ENCODE measurements at regions of chr11 and their contacts with region 1.

Region 1: DNA sequence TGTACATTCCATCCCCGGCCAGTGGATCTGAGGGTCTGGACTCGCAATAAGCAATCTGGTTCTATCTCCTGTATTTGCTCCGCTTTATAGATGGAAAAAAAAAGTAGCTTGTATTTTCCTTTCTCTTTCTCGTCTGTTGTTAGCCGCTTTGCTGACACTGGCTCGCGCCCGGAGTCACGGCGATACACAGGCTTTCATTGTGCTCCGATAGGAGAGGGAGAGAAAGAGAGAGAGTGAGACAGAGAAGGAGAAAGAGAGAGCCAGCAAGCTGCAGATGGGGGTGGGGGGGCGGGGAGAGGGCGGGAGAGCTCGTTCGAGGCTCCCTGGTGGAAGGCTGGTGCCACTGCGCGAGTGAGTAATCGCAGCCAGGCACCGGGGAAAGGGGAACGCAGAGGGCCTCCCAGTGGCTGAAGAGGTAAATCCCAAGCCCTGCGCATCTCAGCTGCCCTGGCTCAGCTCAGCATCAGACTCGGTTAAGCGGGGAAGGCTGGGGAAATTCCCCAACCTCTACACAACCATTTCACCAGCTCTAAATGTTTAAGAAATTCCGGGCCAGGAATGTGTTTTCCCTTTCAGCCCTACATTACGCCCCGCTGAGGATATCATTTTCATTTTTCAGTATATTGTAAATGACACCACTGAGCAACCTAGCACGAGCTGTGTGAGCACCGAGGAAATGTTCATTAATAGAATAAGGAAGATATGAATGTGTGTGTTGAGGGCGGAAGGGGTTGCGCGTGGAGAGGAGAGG is at the start of gene MAML2:
- DNase-seq: peak; percentile 95
- ATAC-seq: peak; percentile 82
- H3K4me3 Mint-ChIP-seq: peak within 1 kb of the TSS; percentile 92
- H3K27ac Mint-ChIP-seq: peak within 1 kb of the TSS; percentile 92
- H3K4me1 Mint-ChIP-seq: peaks cover 33% of the 10 kb centered on the region
- H3K27me3 Mint-ChIP-seq: no peaks in the 10 kb centered on the region
- total RNA-seq, gene MAML2: 12.7 to 14.5 TPM

Region 2: GRCh38 chr11:96012086-96012824 is 330.9 kb before region 1 on chr11:
- CTCF ChIA-PET with region 1: interaction called, 16 read pairs
- DNase-seq: no peak
- ATAC-seq: peak; percentile 37
- H3K4me3 Mint-ChIP-seq: no peak overlapping the region
- H3K27ac Mint-ChIP-seq: peak overlapping the region; percentile 34
- H3K4me1 Mint-ChIP-seq: peaks cover 50% of the 10 kb centered on the region
- H3K27me3 Mint-ChIP-seq: no peaks in the 10 kb centered on the region

Region 3: DNA sequence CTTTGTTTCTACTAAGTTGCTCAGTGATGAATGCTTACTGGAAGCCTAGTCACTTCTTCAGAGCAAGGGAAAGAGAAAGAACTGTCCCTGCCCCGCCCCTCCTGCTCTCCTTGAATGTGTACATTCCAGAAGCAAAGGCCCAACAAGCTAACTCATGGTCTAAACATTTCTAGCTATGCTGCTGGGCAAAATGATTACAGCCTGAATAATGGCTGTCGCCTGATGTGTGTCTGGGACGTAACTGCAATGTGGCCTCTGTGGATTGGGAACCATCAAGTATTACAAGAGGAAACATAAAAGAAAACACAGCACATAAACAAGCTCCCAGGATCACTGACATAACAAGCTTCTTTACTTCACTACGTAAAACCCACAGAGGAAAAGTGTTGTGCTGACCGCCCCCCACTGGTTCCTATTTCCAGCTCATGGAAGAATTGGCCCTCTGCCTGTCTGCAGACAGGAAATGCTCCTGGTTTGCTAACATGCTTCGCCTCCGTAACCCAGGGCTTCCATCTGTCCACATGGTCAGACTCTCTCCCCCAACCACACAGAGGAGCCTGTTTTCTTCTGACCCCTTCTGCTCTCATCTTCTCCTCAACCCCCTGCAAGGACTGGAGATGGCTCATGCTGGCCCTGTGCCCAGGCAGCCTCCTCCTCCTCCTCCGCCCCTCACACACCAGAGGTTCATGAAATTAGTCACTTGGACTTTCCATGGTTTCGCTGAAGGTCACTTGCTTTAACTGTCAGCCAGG is 187.3 kb before region 1 on chr11:
- CTCF ChIA-PET with region 1: interaction called, 12 read pairs
- DNase-seq: peak; percentile 70
- ATAC-seq: peak; percentile 61
- H3K4me3 Mint-ChIP-seq: peak overlapping the region; percentile 31
- H3K27ac Mint-ChIP-seq: peak overlapping the region; percentile 90
- H3K4me1 Mint-ChIP-seq: peaks cover 43% of the 10 kb centered on the region
- H3K27me3 Mint-ChIP-seq: no peaks in the 10 kb centered on the region

Region 4: DNA sequence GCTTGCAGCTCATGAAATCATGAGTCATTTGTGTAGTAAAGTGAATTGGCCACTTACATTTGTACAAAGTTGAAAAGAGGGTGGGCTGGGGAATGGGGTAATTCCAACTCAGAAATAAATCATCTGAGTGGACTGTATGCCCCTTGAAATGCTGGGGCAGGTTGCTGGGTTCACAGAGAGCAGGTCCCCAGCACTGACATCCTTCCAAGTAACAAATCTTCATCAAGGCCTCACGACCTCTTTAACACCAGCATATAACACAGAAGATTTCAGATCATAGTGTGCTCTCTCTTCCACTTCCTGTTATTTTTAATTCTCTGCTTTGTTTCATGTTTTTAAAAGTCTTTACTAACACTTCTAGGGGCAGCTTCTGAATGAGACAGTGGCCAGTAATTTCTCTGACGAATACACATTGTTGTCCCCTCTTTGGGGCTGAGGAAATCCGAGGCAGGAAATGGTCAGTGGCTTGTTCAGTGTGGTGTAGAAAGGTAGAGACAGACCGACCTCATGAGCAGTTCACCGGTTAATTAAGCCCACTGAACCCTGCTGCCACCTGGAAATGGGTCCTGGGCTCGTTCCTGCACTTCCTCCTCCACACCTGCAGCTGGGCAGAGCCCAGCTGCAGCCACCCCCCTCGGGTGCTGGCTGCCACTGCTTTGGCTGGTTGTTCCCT is 127.9 kb before region 1 on chr11:
- CTCF ChIA-PET with region 1: interaction called, 26 read pairs
- DNase-seq: peak; percentile 82
- ATAC-seq: peak; percentile 72
- H3K4me3 Mint-ChIP-seq: peak overlapping the region; percentile 54
- H3K27ac Mint-ChIP-seq: peak overlapping the region; percentile 94
- H3K4me1 Mint-ChIP-seq: peaks cover 71% of the 10 kb centered on the region
- H3K27me3 Mint-ChIP-seq: no peaks in the 10 kb centered on the region

Region 5: DNA sequence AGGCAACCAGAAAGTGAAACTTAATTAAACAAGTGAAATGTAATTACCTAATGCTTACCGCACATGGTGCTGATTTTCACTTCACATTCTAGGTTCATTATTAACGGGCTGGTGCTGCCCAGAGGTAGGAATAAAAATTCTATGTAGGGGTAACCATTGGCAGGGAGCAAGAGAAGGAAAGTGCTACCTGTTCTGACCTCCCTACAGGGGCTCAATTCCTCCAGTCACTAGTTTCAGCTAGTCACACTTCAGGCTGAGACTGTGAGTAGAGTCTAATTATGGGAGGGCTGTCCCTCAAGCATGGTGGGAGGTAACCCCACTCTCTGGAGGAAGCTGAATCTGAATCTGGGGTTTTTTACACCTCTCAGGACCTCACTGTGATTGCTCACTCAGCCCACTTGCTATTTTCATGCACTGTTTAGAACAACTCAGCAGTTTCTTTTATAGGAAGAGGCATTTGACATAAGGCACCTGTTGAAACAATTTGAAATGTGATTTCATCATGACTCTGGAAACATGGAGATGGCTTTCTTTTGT is 75.6 kb before region 1 on chr11:
- CTCF ChIA-PET with region 1: interaction called, 10 read pairs
- DNase-seq: peak; percentile 61
- ATAC-seq: peak; percentile 89
- H3K4me3 Mint-ChIP-seq: peak overlapping the region; percentile 40
- H3K27ac Mint-ChIP-seq: peak overlapping the region; percentile 82
- H3K4me1 Mint-ChIP-seq: peaks cover 54% of the 10 kb centered on the region
- H3K27me3 Mint-ChIP-seq: no peaks in the 10 kb centered on the region

Region 6: DNA sequence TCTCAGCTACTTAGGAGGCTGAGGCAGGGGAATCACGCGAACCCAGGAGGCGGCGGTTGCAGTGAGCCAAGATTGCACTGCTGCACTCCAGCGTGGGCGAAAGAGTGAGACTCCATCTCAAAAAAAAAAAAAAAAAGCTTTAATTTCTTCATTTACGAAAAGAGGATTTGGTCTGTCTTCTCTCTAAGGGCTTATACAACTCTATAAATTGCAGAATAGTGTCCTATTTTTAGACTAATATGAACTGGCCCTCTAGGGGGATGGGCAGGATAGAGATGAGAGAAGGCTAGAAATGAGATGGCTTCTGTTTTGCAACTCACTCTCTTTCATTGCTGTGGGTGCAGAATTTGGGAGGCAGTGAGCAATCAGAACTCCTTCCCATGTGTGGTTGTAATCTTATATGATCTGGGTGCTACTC is 11.4 kb before region 1 on chr11:
- CTCF ChIA-PET with region 1: interaction called, 27 read pairs
- DNase-seq: no peak
- ATAC-seq: peak; percentile 18
- H3K4me3 Mint-ChIP-seq: no peak overlapping the region
- H3K27ac Mint-ChIP-seq: no peak overlapping the region
- H3K4me1 Mint-ChIP-seq: peaks cover 66% of the 10 kb centered on the region
- H3K27me3 Mint-ChIP-seq: no peaks in the 10 kb centered on the region